Endothelial cell of umbilical vein (primary cell): ENCODE measurements at regions of chr12 and their contacts with region 1.

Region 1: GRCh38 chr12:24948757-24949722 is at the start of gene BCAT1:
- DNase-seq: peak; percentile 88
- H3K4me3 ChIP-seq: peak within 1 kb of the TSS; percentile 58 to 95 (median 78)
- H3K27ac ChIP-seq: peak within 1 kb of the TSS; percentile 96
- H3K4me1 ChIP-seq: peaks cover 36% of the 10 kb centered on the region
- H3K27me3 ChIP-seq: no peaks in the 10 kb centered on the region
- CTCF ChIP-seq: peak; percentile 17 to 44
- POLR2A ChIP-seq: peak; percentile 61
- total RNA-seq, gene BCAT1: 267 and 296 TPM in 2 replicates

Region 2: DNA sequence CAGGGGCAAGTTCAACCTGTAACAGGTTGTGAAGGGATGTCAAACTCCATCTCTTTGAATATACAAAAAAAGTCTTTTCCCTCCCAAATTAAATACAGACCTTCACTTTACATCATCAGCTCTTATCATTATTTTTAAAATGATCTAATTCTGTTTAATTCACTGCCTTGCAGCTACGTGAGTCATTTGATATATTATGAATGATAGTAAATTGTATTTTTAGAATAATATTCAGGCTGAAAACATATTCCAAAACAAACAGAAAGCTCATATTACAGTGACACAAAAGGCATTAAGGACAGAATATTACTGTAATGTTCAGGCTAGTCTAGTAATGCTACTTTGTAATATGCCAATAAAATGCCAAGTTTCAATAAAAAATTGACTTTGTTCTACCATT is 53.4 kb before region 1 on chr12:
- CTCF ChIA-PET with region 1: interaction called, 17 read pairs
- POLR2A ChIA-PET with region 1: interaction called, 4 read pairs
- dilution Hi-C with region 1: no loop called
- intact Hi-C with region 1: loop called (anchors 1 kb)
- DNase-seq: peak; percentile 79
- H3K4me3 ChIP-seq: peak overlapping the region in 1 of 3 experiments; percentile 10
- H3K27ac ChIP-seq: peak overlapping the region; percentile 88
- H3K4me1 ChIP-seq: peaks cover 72% of the 10 kb centered on the region
- H3K27me3 ChIP-seq: no peaks in the 10 kb centered on the region
- CTCF ChIP-seq: no peak
- POLR2A ChIP-seq: no peak

Region 3: DNA sequence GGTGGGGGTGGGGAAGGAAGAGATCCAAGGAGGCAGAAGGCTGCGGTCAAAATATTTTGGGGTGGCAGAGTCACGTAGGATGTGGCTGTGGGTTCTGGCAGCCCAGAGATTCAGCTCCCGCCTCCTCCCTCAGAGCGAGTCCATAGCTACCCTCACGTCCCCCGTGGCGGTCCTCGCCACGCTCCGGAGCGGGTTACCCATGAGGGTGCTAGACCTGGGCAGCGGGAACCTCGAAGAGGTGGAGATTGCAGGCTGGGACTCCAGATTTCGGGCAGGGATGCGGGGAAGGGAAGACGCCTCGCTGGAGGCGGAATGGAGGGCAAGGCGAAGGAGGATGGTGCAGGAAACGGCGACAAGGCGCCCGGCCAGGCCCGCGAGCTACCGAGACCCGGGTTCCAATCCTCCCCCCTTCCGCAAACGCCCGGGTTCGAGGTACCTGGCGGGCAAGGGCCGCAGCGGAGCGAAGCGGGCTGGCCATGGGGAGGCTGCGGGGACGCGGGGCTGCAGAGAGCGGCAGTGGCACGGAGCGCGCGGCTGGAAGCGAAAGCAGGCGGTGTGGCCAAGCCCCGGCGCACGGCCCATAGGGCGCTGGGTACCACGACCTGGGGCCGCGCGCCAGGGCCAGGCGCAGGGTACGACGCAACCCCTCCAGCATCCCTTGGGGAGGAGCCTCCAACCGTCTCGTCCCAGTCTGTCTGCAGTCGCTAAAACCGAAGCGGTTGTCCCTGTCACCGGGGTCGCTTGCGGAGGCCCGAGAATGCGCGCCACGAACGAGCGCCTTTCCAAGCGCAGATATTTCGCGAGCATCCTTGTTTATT is 46.3 kb before region 1 on chr12:
- CTCF ChIA-PET with region 1: interaction called, 17 read pairs
- POLR2A ChIA-PET with region 1: interaction called, 10 read pairs
- dilution Hi-C with region 1: no loop called
- intact Hi-C with region 1: loop called (anchors 1 kb)
- DNase-seq: no peak
- H3K4me3 ChIP-seq: peak overlapping the region; percentile 24 to 94 (median 58)
- H3K27ac ChIP-seq: peak overlapping the region; percentile 100
- H3K4me1 ChIP-seq: peaks cover 61% of the 10 kb centered on the region
- H3K27me3 ChIP-seq: no peaks in the 10 kb centered on the region
- CTCF ChIP-seq: no peak
- POLR2A ChIP-seq: no peak

Region 4: GRCh38 chr12:24909667-24910066 is 39.4 kb before region 1 on chr12:
- CTCF ChIA-PET with region 1: interaction called, 3 read pairs
- POLR2A ChIA-PET with region 1: interaction called, 4 read pairs
- dilution Hi-C with region 1: no loop called
- intact Hi-C with region 1: loop called (anchors 1 kb)
- DNase-seq: peak; percentile 86
- H3K4me3 ChIP-seq: no peak overlapping the region
- H3K27ac ChIP-seq: peak overlapping the region; percentile 71
- H3K4me1 ChIP-seq: peaks cover 36% of the 10 kb centered on the region
- H3K27me3 ChIP-seq: no peaks in the 10 kb centered on the region
- CTCF ChIP-seq: no peak
- POLR2A ChIP-seq: no peak

Region 5: GRCh38 chr12:24922090-24922489 is 26.9 kb before region 1 on chr12:
- CTCF ChIA-PET with region 1: interaction called, 8 read pairs
- POLR2A ChIA-PET with region 1: no interaction called
- dilution Hi-C with region 1: no loop called
- intact Hi-C with region 1: loop called (anchors 1 kb)
- DNase-seq: peak; percentile 56
- H3K4me3 ChIP-seq: no peak overlapping the region
- H3K27ac ChIP-seq: peak overlapping the region; percentile 62
- H3K4me1 ChIP-seq: peaks cover 43% of the 10 kb centered on the region
- H3K27me3 ChIP-seq: no peaks in the 10 kb centered on the region
- CTCF ChIP-seq: no peak
- POLR2A ChIP-seq: no peak

Region 6: DNA sequence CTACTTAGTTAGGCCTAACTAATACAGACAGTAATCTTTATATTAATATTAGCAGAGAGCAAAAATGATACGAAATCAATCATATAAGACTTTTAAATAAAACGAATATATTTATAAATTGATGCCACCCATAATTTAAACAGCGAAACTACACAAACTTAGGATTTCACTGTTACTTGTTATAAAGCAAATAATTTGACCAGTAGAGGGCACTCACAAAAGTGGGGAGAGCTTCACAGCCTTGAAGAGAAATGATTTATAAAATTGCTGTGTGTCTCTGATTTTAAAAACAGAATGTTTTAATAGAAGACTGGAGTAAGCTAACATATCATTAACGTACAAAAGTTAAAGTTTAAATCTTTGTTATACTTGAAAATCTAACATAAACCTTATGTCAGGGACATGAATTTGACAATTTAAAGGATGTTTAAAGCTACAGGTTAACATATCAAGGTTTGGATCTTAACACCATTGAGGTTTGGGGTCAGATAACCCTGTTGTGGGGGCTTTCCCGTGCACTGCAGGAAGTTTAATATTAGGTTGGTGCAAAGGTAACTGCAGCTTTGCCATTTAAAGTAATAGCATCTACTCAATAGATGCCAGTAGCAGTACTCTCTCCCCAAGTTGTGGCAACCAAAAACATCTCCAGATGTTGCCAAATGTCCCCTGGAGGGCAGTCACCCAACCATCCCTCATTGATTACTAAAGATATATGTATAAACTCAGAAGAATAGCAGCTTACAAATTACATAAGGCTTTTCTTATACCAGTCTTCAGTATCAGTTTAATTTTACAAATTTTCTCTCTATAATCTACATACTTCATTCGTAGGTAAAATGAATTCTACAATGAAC is 292.4 kb after region 1 on chr12:
- CTCF ChIA-PET with region 1: no interaction called
- POLR2A ChIA-PET with region 1: no interaction called
- dilution Hi-C with region 1: no loop called
- intact Hi-C with region 1: no loop called
- DNase-seq: peak; percentile 55
- H3K4me3 ChIP-seq: no peak overlapping the region
- H3K27ac ChIP-seq: no peak overlapping the region
- H3K4me1 ChIP-seq: no peaks in the 10 kb centered on the region
- H3K27me3 ChIP-seq: no peaks in the 10 kb centered on the region
- CTCF ChIP-seq: peak; percentile 29 to 33
- POLR2A ChIP-seq: no peak

Region 7: GRCh38 chr12:25397001-25397400 is 448.0 kb after region 1 on chr12:
- CTCF ChIA-PET with region 1: no interaction called
- POLR2A ChIA-PET with region 1: no interaction called
- dilution Hi-C with region 1: no loop called
- intact Hi-C with region 1: no loop called
- DNase-seq: no peak
- H3K4me3 ChIP-seq: no peak overlapping the region
- H3K27ac ChIP-seq: no peak overlapping the region
- H3K4me1 ChIP-seq: no peaks in the 10 kb centered on the region
- H3K27me3 ChIP-seq: peaks cover 0 to 7% of the 10 kb centered on the region in 2 experiments
- CTCF ChIP-seq: no peak
- POLR2A ChIP-seq: no peak